ENCODE measurements at regions of chr2 and their contacts with region 1.

Region 1: DNA sequence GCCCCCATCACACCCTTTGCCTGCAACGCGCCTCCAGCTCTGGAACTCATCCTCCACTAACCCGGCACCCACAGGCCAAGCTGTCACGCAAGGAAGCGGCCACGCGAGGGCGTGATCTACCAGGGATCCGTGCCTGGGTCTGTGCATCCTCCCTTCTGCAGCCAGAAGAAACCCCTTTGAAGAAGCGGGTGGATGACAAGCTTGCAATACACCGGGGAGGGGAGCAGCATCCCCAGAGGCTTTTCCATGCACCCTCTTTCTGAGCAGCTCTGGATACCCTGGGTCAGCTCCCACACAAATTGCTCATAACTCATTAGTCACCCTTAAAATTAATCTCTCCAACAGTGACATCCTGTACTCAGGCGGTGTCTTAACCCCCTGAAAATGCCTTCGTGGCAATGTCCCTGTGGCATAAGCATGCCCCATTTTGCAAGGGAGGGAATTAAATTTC is 47.6 kb downstream of the PDCL3 start:
- DNase-seq: peak; percentile 37
- H3K4me3 ChIP-seq: no peak overlapping the region
- H3K27ac ChIP-seq: no peak overlapping the region
- H3K4me1 ChIP-seq: no peaks in the 10 kb centered on the region
- H3K27me3 ChIP-seq: no peaks in the 10 kb centered on the region
- CTCF ChIP-seq: peak; percentile 50 to 75

Region 2: GRCh38 chr2:100902833-100903405 is 292.5 kb after region 1 on chr2:
- CTCF ChIA-PET with region 1: interaction called, 5 read pairs
- dilution Hi-C with region 1: no loop called
- in situ Hi-C with region 1: no loop called
- intact Hi-C with region 1: loop called (anchors 5 kb)
- DNase-seq: peak; percentile 92
- H3K4me3 ChIP-seq: no peak overlapping the region
- H3K27ac ChIP-seq: peak overlapping the region; percentile 50
- H3K4me1 ChIP-seq: peaks cover 46% of the 10 kb centered on the region
- H3K27me3 ChIP-seq: no peaks in the 10 kb centered on the region
- CTCF ChIP-seq: peak in 1 of 2 donors; percentile 8

Region 3: DNA sequence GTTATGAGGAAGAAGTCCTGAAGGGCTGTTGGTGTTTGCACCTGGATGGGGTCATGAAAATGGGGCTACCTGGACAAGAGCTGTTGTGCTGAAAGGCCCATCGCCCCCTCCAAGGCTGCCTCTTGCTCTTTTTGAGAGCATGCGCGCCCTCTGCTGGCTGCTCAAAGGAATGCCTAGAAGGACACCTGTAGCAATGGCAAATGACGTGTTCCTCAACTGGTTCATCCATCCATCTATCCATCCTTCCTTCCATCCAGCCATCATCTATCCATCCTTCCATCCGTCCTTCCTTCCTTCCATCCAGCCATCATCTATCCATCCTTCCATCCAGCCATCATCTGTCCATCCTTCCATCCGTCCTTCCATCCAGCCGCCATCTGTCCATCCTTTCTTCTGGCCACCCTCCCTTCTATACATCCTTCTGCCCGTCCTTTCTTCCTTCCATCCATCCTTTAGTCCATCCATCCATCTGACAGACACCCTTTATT is 374.5 kb after region 1 on chr2:
- CTCF ChIA-PET with region 1: no interaction called
- dilution Hi-C with region 1: loop called (anchors 25 kb)
- in situ Hi-C with region 1: loop called in 1 of 2 experiments (anchors 25 kb)
- intact Hi-C with region 1: loop called (anchors 1 kb)
- DNase-seq: peak; percentile 47
- H3K4me3 ChIP-seq: no peak overlapping the region
- H3K27ac ChIP-seq: no peak overlapping the region
- H3K4me1 ChIP-seq: no peaks in the 10 kb centered on the region
- H3K27me3 ChIP-seq: no peaks in the 10 kb centered on the region
- CTCF ChIP-seq: peak; percentile 83 to 88

Region 4: DNA sequence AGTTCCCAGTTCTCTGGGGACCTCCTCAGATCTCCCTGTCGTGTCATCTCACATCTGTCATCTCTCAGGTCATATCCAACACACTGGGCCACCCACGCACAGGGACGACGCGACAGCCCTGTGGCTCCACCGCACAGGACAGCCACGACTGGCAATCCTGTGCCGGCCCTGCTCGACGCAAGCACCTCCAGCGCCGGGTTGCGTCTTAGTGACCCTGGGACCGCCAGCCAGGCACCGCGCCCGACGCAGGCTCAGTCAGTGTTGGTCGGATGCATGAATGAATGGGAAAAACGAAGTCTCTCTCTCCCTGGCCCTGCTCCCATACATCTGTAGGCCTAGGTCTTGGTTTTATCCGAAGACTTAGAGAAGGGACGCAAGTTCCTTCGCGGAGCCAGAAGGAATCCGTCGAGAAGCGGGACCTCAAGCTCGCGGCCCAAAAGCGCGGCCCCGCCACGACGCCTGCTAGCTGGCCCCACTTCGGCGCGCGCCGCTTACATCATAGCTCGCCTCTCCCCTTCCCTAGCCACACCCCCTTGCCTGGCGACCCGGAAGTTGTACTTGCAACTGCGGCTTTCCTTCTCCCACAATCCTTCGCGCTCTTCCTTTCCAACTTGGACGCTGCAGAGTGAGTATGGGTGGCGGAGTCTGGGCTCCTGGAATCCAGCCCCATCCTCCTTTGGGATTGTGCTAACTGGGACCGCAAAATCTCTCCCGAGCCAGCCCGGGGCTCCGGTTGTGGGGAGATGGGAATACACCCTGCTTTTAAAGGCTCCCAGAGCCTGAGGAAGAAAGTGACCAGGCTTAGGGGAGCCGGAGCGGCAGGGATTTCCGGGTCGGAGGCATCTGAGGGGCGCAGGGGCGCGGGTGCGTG is 391.5 kb after region 1 on chr2 and contains the start of gene RPL31:
- CTCF ChIA-PET with region 1: no interaction called
- dilution Hi-C with region 1: loop called (anchors 25 kb)
- in situ Hi-C with region 1: loop called (anchors 10 to 25 kb)
- intact Hi-C with region 1: loop called (anchors 5 kb)
- DNase-seq: peak; percentile 93
- H3K4me3 ChIP-seq: peak within 1 kb of the TSS; percentile 90 to 95 (median 91)
- H3K27ac ChIP-seq: peak within 1 kb of the TSS; percentile 87
- H3K4me1 ChIP-seq: peaks cover 22% of the 10 kb centered on the region
- H3K27me3 ChIP-seq: no peaks in the 10 kb centered on the region
- CTCF ChIP-seq: no peak
- total RNA-seq, gene RPL31: 731 to 1,237 TPM

Region 5: DNA sequence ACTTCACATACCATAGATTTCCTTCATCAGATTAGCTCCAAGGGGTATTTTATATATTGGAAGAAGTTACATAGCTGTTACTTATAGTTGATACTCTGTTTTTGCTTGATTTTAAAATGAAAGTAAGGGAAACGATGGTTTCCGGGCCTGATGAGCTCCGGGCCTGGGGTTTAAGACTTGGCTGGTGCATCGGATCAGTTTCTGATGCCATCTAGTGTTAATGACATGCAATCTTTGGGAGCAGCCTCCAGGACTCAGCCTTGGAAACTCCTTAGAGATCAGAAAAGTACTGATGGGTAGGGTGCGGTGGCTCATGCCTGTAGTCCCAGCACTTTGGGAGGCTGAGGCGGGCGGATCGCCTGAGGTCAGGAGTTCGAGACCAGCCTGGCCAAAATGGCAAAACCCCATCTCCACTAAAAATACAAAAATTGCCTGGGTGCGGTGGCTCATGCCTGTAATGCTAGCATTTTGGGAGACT is 595.2 kb after region 1 on chr2:
- CTCF ChIA-PET with region 1: no interaction called
- dilution Hi-C with region 1: no loop called
- in situ Hi-C with region 1: loop called in 1 of 2 experiments (anchors 25 kb)
- intact Hi-C with region 1: loop called (anchors 2 kb)
- DNase-seq: peak; percentile 82
- H3K4me3 ChIP-seq: peak overlapping the region; percentile 10 to 55 (median 42)
- H3K27ac ChIP-seq: peak overlapping the region; percentile 48
- H3K4me1 ChIP-seq: peaks cover 8% of the 10 kb centered on the region
- H3K27me3 ChIP-seq: no peaks in the 10 kb centered on the region
- CTCF ChIP-seq: peak; percentile 60 to 70